OCI-LY7 (cell line): ENCODE measurements at regions of chr3 and their contacts with region 1.

Region 1: DNA sequence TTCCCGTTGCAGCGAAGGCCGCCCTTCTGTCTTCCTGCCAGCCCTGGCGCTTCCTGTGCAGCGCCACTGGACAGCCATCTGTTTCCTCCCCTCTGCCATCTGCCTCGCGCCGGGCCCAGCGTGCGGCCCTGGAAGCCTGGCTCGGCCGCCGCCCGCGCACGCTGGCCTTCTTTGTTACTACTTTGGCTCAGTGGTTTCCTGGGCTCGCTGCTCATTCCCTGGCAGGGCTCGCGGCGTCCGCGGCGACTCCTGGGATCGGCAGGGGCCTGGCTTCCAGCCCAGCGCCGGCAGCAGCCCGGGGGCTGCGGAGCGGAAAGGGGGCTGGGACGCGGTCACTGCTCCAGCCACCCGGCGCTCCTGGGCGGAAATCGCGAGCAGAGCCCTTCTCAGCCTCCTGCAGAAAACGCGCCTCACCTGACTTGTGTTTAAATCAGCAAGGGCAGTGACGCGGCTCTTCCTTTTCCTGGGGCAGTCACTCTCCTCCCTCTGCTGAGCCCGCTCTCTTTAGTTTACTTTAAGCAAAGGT is 10.0 kb downstream of the CMTM7 start:
- DNase-seq: peak; percentile 84
- H3K4me3 ChIP-seq: peak overlapping the region; percentile 62
- H3K27ac ChIP-seq: peak overlapping the region; percentile 50
- H3K4me1 ChIP-seq: peaks cover 42% of the 10 kb centered on the region
- CTCF ChIP-seq: no peak

Region 2: GRCh38 chr3:32296256-32297204 is 105.1 kb before region 1 on chr3:
- CTCF ChIA-PET with region 1: no interaction called
- POLR2A ChIA-PET with region 1: no interaction called
- intact Hi-C with region 1: loop called (anchors 2 kb)
- DNase-seq: peak; percentile 68
- H3K4me3 ChIP-seq: no peak overlapping the region
- H3K27ac ChIP-seq: no peak overlapping the region
- H3K4me1 ChIP-seq: peaks cover 6% of the 10 kb centered on the region
- CTCF ChIP-seq: peak; percentile 95

Region 3: DNA sequence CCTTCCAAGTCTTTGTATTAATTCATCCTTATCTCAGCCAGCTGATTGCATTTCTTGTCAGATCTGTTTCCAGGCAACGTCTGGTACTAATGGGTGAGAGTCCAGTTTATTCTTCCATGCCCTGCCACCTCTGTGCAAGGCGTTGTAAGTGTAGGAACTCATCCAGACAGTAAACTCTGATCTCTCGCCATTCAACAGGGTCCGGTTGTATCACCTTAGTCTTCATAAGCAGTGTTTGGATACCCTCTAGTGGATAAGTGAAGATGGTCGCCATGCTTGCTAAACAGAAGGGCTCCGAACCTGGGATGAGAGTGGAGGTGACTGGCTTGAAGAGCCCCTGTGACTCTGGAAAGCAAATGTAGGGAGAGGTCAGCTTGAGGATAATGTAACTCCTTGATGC is 61.6 kb before region 1 on chr3:
- CTCF ChIA-PET with region 1: no interaction called
- POLR2A ChIA-PET with region 1: no interaction called
- intact Hi-C with region 1: loop called (anchors 2 kb)
- DNase-seq: peak; percentile 64
- H3K4me3 ChIP-seq: no peak overlapping the region
- H3K27ac ChIP-seq: no peak overlapping the region
- H3K4me1 ChIP-seq: no peaks in the 10 kb centered on the region
- CTCF ChIP-seq: peak; percentile 77

Region 4: DNA sequence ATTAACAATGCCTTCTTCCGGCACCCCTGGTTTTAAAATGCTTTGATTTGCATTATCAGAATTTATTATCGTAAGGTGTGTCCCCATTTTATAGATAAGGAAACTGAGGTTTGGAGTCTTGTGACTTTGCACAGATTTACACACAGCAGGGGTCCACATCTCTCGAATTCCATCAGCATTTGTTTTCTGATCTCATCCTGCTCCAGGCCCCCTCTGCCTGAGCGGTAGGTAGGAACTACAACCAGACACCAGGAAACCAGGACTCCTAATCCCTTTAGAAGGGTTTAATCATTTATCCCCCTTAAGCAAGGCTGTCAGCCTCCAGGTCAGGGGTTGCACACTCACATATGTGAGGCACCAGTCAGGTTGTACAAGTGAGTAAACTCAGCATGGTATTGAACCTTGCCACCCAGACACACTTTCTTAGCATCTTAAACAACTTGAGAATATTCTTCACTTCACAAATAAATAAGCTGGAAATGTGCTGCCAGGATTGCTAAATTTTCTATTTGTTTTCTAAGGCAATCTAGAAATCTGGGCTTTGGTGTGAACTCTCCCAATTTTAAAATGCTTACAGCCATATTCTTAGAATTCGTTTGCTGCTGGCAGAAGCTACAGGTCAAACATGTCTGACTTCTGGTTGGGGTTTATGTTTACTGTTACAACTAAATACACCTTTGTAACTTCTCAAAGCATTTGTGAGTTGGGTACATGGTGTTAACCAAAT is 41.7 kb before region 1 on chr3:
- CTCF ChIA-PET with region 1: no interaction called
- POLR2A ChIA-PET with region 1: no interaction called
- intact Hi-C with region 1: no loop called
- DNase-seq: no peak
- H3K4me3 ChIP-seq: no peak overlapping the region
- H3K27ac ChIP-seq: no peak overlapping the region
- H3K4me1 ChIP-seq: no peaks in the 10 kb centered on the region
- CTCF ChIP-seq: no peak

Region 5: GRCh38 chr3:32374788-32375595 is 26.6 kb before region 1 on chr3:
- CTCF ChIA-PET with region 1: interaction called, 3 read pairs
- POLR2A ChIA-PET with region 1: interaction called, 4 read pairs
- intact Hi-C with region 1: loop called (anchors 1 kb)
- DNase-seq: peak; percentile 82
- H3K4me3 ChIP-seq: no peak overlapping the region
- H3K27ac ChIP-seq: no peak overlapping the region
- H3K4me1 ChIP-seq: peaks cover 10% of the 10 kb centered on the region
- CTCF ChIP-seq: peak; percentile 91

Region 6: DNA sequence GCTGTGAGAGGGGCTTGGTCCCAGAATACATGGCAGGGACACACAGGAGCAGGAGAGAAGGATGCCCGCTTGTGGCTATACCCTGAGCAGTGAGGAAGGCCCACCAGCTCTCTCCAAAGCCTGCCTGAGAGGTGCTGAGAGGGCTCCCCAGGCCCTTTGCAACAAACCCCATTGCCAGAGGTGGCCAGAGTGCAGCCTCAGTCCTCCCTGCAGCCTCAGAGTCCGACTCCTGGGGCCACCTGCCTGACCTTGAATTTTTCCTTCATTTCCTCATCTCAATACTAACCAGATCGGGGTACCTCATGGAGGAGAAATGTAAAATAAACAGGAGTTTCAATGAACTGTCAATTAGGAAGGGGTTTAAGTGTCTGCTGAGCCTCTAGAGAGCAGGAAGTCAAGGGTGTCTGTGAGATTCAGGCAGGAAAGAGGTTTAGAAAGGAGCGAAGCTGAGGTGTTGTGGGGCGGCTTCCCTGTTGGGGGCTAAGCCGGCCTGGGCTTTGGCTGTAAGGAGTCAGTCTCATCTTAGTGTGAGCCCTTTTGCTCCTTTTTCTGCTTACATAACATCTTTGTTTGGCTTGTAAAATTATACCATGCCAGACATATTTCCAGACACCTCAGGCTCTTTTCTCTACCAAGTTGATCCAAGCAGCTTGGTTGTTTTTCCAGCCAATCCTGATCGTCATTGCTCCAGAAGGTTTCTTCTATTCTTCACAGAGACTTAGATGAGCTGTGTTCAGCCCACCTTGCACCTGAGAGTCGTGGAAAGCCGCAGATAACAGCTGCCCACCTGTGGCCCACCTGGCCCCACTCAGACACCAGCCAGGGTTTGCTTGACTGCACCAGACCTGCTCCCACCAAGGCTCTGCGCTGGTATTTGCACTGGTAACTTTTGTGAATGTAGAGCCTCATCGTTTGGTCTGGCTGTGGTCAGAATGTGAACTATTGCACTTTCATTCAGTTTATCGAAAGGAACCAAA is 26.8 kb after region 1 on chr3:
- CTCF ChIA-PET with region 1: no interaction called
- POLR2A ChIA-PET with region 1: interaction called, 4 read pairs
- intact Hi-C with region 1: loop called (anchors 2 kb)
- DNase-seq: peak; percentile 87
- H3K4me3 ChIP-seq: peak overlapping the region; percentile 45
- H3K27ac ChIP-seq: peak overlapping the region; percentile 82
- H3K4me1 ChIP-seq: peaks cover 94% of the 10 kb centered on the region
- CTCF ChIP-seq: no peak

Region 7: GRCh38 chr3:32467333-32468070 is 65.9 kb after region 1 on chr3:
- CTCF ChIA-PET with region 1: no interaction called
- POLR2A ChIA-PET with region 1: no interaction called
- intact Hi-C with region 1: loop called (anchors 2 kb)
- DNase-seq: peak; percentile 82
- H3K4me3 ChIP-seq: peak overlapping the region; percentile 44
- H3K27ac ChIP-seq: no peak overlapping the region
- H3K4me1 ChIP-seq: peaks cover 9% of the 10 kb centered on the region
- CTCF ChIP-seq: peak; percentile 89